Heart right ventricle (tissue), 16 donors: ENCODE measurements at regions of chr18 and their contacts with region 1.

Region 1: GRCh38 chr18:77067291-77068061 is 65.1 kb downstream of the MBP start:
- DNase-seq: peak; percentile 45 to 58
- ATAC-seq: peak; percentile 39 to 82 (median 72)
- H3K4me3 ChIP-seq: peak overlapping the region in 1 of 10 donors; percentile 8
- H3K27ac ChIP-seq: peak overlapping the region in 9 of 10 donors; percentile 57 to 91 (median 78)
- H3K4me1 ChIP-seq: peaks cover 8 to 100% (median 66%) of the 10 kb centered on the region in 9 donors
- H3K27me3 ChIP-seq: no peaks in the 10 kb centered on the region
- CTCF ChIP-seq: peak in 2 of 9 donors; percentile 3 to 9

Region 2: GRCh38 chr18:77101410-77102258 is 34.2 kb after region 1 on chr18:
- intact Hi-C with region 1: loop called in 2 of 10 experiments (anchors 5 kb)
- DNase-seq: peak; percentile 64 to 66
- ATAC-seq: peak; percentile 47 to 84 (median 55)
- H3K4me3 ChIP-seq: peak overlapping the region in 1 of 10 donors; percentile 13
- H3K27ac ChIP-seq: peak overlapping the region in 9 of 10 donors; percentile 15 to 93 (median 77)
- H3K4me1 ChIP-seq: peaks cover 9 to 100% (median 69%) of the 10 kb centered on the region in 9 donors
- H3K27me3 ChIP-seq: peaks cover 0 to 9% (median 0%) of the 10 kb centered on the region in 7 donors
- CTCF ChIP-seq: no peak

Region 3: GRCh38 chr18:77108001-77108692 is 40.7 kb after region 1 on chr18:
- intact Hi-C with region 1: loop called in 2 of 10 experiments (anchors 5 kb)
- DNase-seq: no peak
- ATAC-seq: peak; percentile 51 to 82 (median 68)
- H3K4me3 ChIP-seq: peak overlapping the region in 5 of 10 donors; percentile 19 to 36 (median 23)
- H3K27ac ChIP-seq: peak overlapping the region; percentile 24 to 93 (median 78)
- H3K4me1 ChIP-seq: peaks cover 9 to 95% (median 49%) of the 10 kb centered on the region in 9 donors
- H3K27me3 ChIP-seq: peaks cover 0 to 5% (median 0%) of the 10 kb centered on the region in 7 donors
- CTCF ChIP-seq: no peak

Region 4: GRCh38 chr18:77147418-77147852 is 80.0 kb after region 1 on chr18:
- intact Hi-C with region 1: no loop called
- DNase-seq: no peak
- ATAC-seq: peak in 3 of 8 donors; percentile 52 to 68 (median 56)
- H3K4me3 ChIP-seq: no peak overlapping the region
- H3K27ac ChIP-seq: no peak overlapping the region
- H3K4me1 ChIP-seq: peaks cover 0 to 19% (median 0%) of the 10 kb centered on the region in 9 donors
- H3K27me3 ChIP-seq: peaks cover 0 to 5% (median 0%) of the 10 kb centered on the region in 7 donors
- CTCF ChIP-seq: no peak